Tibial artery (tissue), 4 donors: ENCODE measurements at regions of chr14 and their contacts with region 1.

Region 1: GRCh38 chr14:25132732-25133422 is 82.9 kb upstream of the STXBP6 start:
- DNase-seq: peak in 1 of 2 donors; percentile 42
- H3K4me3 ChIP-seq: no peak overlapping the region
- H3K27ac ChIP-seq: no peak overlapping the region
- H3K4me1 ChIP-seq: peaks cover 0 to 3% (median 0%) of the 10 kb centered on the region in 4 donors
- H3K27me3 ChIP-seq: peaks cover 0 to 37% of the 10 kb centered on the region in 2 donors
- CTCF ChIP-seq: peak; percentile 75 to 87

Region 2: DNA sequence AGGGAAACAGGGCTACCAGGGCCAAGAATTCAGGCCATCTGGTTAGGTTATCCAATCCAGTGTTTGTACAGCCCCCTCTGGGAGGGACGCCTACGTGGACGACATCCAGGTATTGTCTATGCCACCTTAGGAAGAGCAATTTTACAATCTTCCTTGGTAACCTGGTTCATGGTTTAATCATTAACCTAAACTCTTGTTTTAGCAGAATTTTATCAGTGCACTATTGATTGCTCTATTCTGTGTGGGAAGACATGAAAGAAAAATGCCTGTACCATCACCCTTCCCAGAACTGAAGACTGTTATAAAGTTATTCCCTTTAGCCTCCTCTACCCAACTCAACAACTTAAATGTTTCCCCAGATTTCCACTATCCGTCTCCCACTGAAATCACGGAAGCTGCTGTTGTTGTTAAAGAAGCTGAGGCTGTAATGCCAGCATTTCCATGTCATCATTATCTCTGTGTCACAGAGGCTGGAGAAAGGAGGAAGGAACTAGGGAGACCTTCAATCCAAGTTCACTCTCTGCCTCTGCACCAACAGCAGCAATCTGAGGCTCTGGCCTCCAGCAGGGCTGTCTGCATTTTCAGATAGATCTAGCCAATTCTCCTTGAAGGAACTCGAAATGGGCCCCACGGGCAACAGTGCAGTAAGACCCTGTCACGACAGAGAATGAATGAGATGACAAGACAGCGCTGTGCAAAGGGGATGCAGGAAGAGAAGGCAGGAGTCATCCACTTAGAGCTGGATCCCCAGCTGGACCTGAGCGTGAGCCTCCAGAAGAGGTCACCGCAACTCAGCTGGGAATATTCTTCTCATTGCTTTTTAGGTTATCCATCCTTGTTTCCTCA is 315.4 kb before region 1 on chr14:
- intact Hi-C with region 1: loop called (anchors 10 kb)
- DNase-seq: no peak
- H3K4me3 ChIP-seq: no peak overlapping the region
- H3K27ac ChIP-seq: no peak overlapping the region
- H3K4me1 ChIP-seq: peaks cover 0 to 11% (median 0%) of the 10 kb centered on the region in 4 donors
- H3K27me3 ChIP-seq: no peaks in the 10 kb centered on the region
- CTCF ChIP-seq: peak in 1 of 2 experiments; percentile 28